Dendritic cell treated with granulocyte-macrophage colony-stimulating factor and Interleukin-4, amounts not matched to agents 40 ng/mL and 50 ng/mL, for 4 days (primary cell): ENCODE measurements at regions of chr16 and their contacts with region 1.

Region 1: DNA sequence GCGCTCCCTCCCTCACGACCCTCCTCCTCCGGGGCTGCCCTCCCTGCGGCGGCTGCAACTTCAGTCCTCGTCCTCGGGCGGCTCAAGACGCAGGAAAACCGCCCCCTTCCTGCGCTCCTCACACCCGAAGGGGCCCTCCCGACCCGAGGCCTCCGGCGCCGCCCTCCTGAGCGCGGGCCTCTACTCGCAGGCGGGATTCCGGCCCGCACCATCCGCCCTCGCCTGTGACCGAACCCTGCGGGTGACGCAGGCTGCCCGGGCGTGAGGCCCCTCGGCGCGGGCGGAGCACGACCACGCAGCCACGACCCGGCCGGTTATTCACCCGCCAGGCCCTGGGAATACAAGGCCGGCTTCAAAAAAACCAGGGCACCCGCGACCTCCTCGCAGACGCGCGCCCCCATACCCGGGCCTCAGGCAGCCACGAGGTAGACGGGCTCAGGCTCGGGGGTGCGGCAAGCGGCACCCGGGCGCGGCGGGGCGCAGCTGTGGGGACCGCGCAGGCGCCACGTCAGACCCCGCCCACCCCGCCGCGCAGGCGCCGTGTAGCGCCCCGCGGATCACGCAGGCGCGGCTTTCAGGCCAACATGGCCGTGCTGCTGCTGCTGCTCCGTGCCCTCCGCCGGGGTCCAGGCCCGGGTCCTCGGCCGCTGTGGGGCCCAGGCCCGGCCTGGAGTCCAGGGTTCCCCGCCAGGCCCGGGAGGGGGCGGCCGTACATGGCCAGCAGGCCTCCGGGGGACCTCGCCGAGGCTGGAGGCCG is at the start of gene SPG7:
- H3K4me3 Mint-ChIP-seq: peak within 1 kb of the TSS; percentile 78
- H3K27ac Mint-ChIP-seq: peak within 1 kb of the TSS; percentile 85
- H3K4me1 Mint-ChIP-seq: peaks cover 46% of the 10 kb centered on the region
- H3K27me3 Mint-ChIP-seq: no peaks in the 10 kb centered on the region

Region 2: GRCh38 chr16:89115216-89115861 is 392.7 kb before region 1 on chr16:
- intact Hi-C with region 1: loop called (anchors 5 kb)
- H3K4me3 Mint-ChIP-seq: peak overlapping the region; percentile 85
- H3K27ac Mint-ChIP-seq: peak overlapping the region; percentile 94
- H3K4me1 Mint-ChIP-seq: peaks cover 57% of the 10 kb centered on the region
- H3K27me3 Mint-ChIP-seq: no peaks in the 10 kb centered on the region

Region 3: GRCh38 chr16:89330177-89330856 is 177.7 kb before region 1 on chr16:
- intact Hi-C with region 1: loop called (anchors 5 kb)
- H3K4me3 Mint-ChIP-seq: peak overlapping the region; percentile 35
- H3K27ac Mint-ChIP-seq: peak overlapping the region; percentile 54
- H3K4me1 Mint-ChIP-seq: peaks cover 78% of the 10 kb centered on the region
- H3K27me3 Mint-ChIP-seq: no peaks in the 10 kb centered on the region

Region 4: GRCh38 chr16:89473791-89474414 is 34.1 kb before region 1 on chr16:
- intact Hi-C with region 1: loop called (anchors 5 kb)
- H3K4me3 Mint-ChIP-seq: peak overlapping the region; percentile 14
- H3K27ac Mint-ChIP-seq: peak overlapping the region; percentile 60
- H3K4me1 Mint-ChIP-seq: peaks cover 95% of the 10 kb centered on the region
- H3K27me3 Mint-ChIP-seq: no peaks in the 10 kb centered on the region